Sigmoid colon (tissue), 7 donors: ENCODE measurements at regions of chr4 and their contacts with region 1.

Region 1: GRCh38 chr4:152847415-152847775 is 67.6 kb downstream of the ARFIP1 start:
- DNase-seq: no peak
- H3K4me3 ChIP-seq: no peak overlapping the region
- H3K27ac ChIP-seq: no peak overlapping the region
- H3K4me1 ChIP-seq: peaks cover 0 to 10% (median 0%) of the 10 kb centered on the region in 4 donors
- H3K27me3 ChIP-seq: no peaks in the 10 kb centered on the region
- CTCF ChIP-seq: no peak
- EP300 ChIP-seq: no peak
- POLR2A ChIP-seq: no peak

Region 2: GRCh38 chr4:153127760-153128494 is 280.5 kb after region 1 on chr4:
- intact Hi-C with region 1: loop called (anchors 2 kb)
- DNase-seq: peak; percentile 88
- H3K4me3 ChIP-seq: no peak overlapping the region
- H3K27ac ChIP-seq: no peak overlapping the region
- H3K4me1 ChIP-seq: peaks cover 0 to 9% (median 1%) of the 10 kb centered on the region in 4 donors
- H3K27me3 ChIP-seq: no peaks in the 10 kb centered on the region
- CTCF ChIP-seq: peak; percentile 32 to 81 (median 74)
- EP300 ChIP-seq: no peak
- POLR2A ChIP-seq: no peak